ENCODE measurements at regions of chr3 and their contacts with region 1.

Region 1: DNA sequence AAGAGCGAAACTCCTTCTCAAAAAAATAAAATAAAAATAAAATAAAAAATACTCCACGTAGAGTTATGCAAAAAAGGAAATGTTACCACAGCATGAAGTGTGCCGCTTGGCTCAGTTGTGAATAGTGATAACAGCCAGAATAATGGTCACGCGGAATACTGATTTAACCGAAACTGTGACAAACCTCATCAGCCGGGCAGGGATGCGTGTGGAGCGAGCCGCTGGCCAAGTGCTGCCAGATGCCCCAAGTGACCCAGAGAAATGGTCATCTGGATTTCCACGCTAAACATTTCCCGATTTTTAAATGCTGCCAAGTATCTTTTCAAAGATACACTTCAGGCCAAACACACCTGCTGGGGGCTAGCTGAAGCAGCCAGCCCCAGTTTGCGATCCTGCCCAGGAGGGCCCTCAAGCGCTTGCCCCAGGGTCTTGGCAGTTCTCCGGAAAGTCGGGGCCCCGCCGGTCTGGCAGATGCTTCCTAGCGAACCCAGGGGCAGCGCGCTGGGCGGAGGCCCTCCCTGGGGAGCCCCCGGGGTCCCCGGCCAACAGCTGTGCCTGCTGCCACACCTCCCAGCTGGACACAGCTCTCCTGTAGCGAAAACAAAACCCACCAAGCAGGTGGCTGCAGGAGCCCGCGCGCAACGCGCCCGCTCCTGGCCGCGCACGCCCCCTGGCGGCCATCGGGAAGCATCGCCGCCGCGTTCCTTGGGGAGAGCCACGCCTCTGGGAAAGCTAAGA is 35.1 kb downstream of the CMTM6 start:
- DNase-seq: peak; percentile 79
- H3K4me3 ChIP-seq: peak overlapping the region; percentile 23 to 47 (median 42)
- H3K27ac ChIP-seq: no peak overlapping the region
- H3K4me1 ChIP-seq: peaks cover 0 to 24% (median 13%) of the 10 kb centered on the region in 4 donors
- H3K27me3 ChIP-seq: no peaks in the 10 kb centered on the region
- CTCF ChIP-seq: peak; percentile 76 to 100 (median 90)
- EP300 ChIP-seq: no peak
- POLR2A ChIP-seq: no peak

Region 2: GRCh38 chr3:32296256-32297204 is 171.0 kb before region 1 on chr3:
- intact Hi-C with region 1: loop called (anchors 1 kb)
- DNase-seq: peak; percentile 76
- H3K4me3 ChIP-seq: no peak overlapping the region
- H3K27ac ChIP-seq: no peak overlapping the region
- H3K4me1 ChIP-seq: no peaks in the 10 kb centered on the region
- H3K27me3 ChIP-seq: no peaks in the 10 kb centered on the region
- CTCF ChIP-seq: peak; percentile 53 to 92 (median 65)
- EP300 ChIP-seq: no peak
- POLR2A ChIP-seq: no peak

Region 3: GRCh38 chr3:32374788-32375595 is 92.5 kb before region 1 on chr3:
- intact Hi-C with region 1: loop called (anchors 1 kb)
- DNase-seq: peak; percentile 72
- H3K4me3 ChIP-seq: no peak overlapping the region
- H3K27ac ChIP-seq: no peak overlapping the region
- H3K4me1 ChIP-seq: no peaks in the 10 kb centered on the region
- H3K27me3 ChIP-seq: no peaks in the 10 kb centered on the region
- CTCF ChIP-seq: peak; percentile 22 to 66 (median 60)
- EP300 ChIP-seq: no peak
- POLR2A ChIP-seq: no peak

Region 4: GRCh38 chr3:32391643-32392535 is 75.6 kb before region 1 on chr3 and contains the start of gene CMTM7:
- intact Hi-C with region 1: loop called (anchors 5 kb)
- DNase-seq: peak; percentile 82
- H3K4me3 ChIP-seq: peak within 1 kb of the TSS; percentile 48 to 71 (median 68)
- H3K27ac ChIP-seq: peak within 1 kb of the TSS; percentile 63 to 82 (median 69)
- H3K4me1 ChIP-seq: peaks cover 0 to 12% (median 9%) of the 10 kb centered on the region in 4 donors
- H3K27me3 ChIP-seq: no peaks in the 10 kb centered on the region
- CTCF ChIP-seq: no peak
- EP300 ChIP-seq: no peak
- POLR2A ChIP-seq: no peak
- total RNA-seq, gene CMTM7: 7.1 to 9.9 (median 8.2) TPM

Region 5: DNA sequence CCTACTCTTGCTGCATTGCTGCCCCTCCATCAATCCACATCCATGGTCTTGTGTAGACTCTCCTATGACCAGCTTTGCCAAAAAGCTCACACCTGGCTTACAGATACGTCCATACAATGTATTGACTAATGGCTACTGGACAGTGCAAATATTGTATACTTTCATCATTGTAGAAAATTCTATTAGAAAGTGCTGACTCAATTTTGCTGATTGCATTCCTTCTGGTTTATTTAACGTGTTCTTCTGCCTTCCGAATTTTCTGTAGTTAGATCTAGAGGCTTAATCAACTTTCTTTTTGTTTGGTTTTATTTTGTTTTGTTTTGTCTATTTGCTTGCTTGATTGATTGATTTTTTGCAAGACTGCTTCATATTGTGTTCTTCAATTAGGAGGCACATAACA is 187.7 kb after region 1 on chr3:
- intact Hi-C with region 1: no loop called
- DNase-seq: no peak
- H3K4me3 ChIP-seq: no peak overlapping the region
- H3K27ac ChIP-seq: no peak overlapping the region
- H3K4me1 ChIP-seq: no peaks in the 10 kb centered on the region
- H3K27me3 ChIP-seq: peaks cover 0 to 9% (median 3%) of the 10 kb centered on the region in 3 donors
- CTCF ChIP-seq: no peak
- EP300 ChIP-seq: no peak
- POLR2A ChIP-seq: no peak